Natural killer cell (primary cell): ENCODE measurements at regions of chr5 and their contacts with region 1.

Region 1: GRCh38 chr5:68287976-68288706 is 72.6 kb downstream of the PIK3R1 start:
- DNase-seq: peak; percentile 53 to 72
- ATAC-seq: peak; percentile 77 to 86 (median 82)
- H3K4me3 ChIP-seq: peak overlapping the region; percentile 62
- H3K4me3 Mint-ChIP-seq: peak overlapping the region; percentile 92
- H3K27ac ChIP-seq: peak overlapping the region; percentile 88
- H3K27ac Mint-ChIP-seq: peak overlapping the region; percentile 92
- H3K4me1 ChIP-seq: peaks cover 31% of the 10 kb centered on the region
- H3K4me1 Mint-ChIP-seq: peaks cover 83 to 88% of the 10 kb centered on the region in 2 donors
- H3K27me3 ChIP-seq: no peaks in the 10 kb centered on the region
- H3K27me3 Mint-ChIP-seq: no peaks in the 10 kb centered on the region
- CTCF ChIP-seq: no peak

Region 2: GRCh38 chr5:68041293-68041692 is 246.8 kb before region 1 on chr5:
- intact Hi-C with region 1: no loop called
- DNase-seq: no peak
- ATAC-seq: peak; percentile 58 to 94 (median 64)
- H3K4me3 ChIP-seq: no peak overlapping the region
- H3K4me3 Mint-ChIP-seq: no peak overlapping the region
- H3K27ac ChIP-seq: no peak overlapping the region
- H3K27ac Mint-ChIP-seq: no peak overlapping the region
- H3K4me1 ChIP-seq: peaks cover 13% of the 10 kb centered on the region
- H3K4me1 Mint-ChIP-seq: peaks cover 6 to 14% of the 10 kb centered on the region in 2 donors
- H3K27me3 ChIP-seq: peaks cover 2% of the 10 kb centered on the region
- H3K27me3 Mint-ChIP-seq: peaks cover 0 to under 1% of the 10 kb centered on the region in 2 donors
- CTCF ChIP-seq: no peak

Region 3: DNA sequence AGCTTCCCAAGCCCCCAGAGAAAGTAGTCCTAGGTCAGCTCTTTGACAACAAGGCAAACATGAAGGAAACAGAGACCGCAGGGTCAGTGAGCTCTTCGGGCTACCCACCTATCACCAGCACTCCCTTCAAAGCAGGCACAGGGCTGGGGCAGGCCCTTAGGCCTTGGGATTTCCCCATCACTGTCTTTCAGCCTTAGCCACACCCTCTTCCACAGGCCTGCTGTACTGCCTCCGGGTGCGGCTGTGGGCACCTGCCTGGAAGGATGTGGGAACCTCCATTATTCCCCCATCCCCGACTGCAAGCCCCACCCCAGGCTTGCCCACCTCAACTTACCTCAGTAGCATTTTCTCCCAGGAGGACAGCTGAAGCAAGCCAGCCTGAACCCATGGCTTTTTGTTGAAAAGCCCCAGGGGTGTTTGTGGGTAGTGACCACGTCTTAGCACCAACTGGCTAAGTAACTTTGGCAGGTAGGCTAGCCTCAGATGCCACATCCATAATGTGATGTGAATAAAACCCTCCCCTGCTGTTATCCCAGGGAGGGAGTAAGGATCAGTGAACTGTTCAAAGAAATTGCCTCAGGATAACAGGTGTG is 27.6 kb after region 1 on chr5:
- intact Hi-C with region 1: loop called (anchors 2 kb)
- DNase-seq: peak; percentile 31 to 69
- ATAC-seq: peak; percentile 92 to 95 (median 94)
- H3K4me3 ChIP-seq: no peak overlapping the region
- H3K4me3 Mint-ChIP-seq: no peak overlapping the region
- H3K27ac ChIP-seq: peak overlapping the region; percentile 61
- H3K27ac Mint-ChIP-seq: peak overlapping the region; percentile 24 to 39
- H3K4me1 ChIP-seq: peaks cover 20% of the 10 kb centered on the region
- H3K4me1 Mint-ChIP-seq: peaks cover 10 to 14% of the 10 kb centered on the region in 2 donors
- H3K27me3 ChIP-seq: no peaks in the 10 kb centered on the region
- H3K27me3 Mint-ChIP-seq: no peaks in the 10 kb centered on the region
- CTCF ChIP-seq: no peak

Region 4: GRCh38 chr5:68343421-68343826 is 55.3 kb after region 1 on chr5:
- intact Hi-C with region 1: loop called (anchors 10 kb)
- DNase-seq: peak in 1 of 2 donors; percentile 14
- ATAC-seq: peak in 2 of 3 donors; percentile 24 to 28
- H3K4me3 ChIP-seq: no peak overlapping the region
- H3K4me3 Mint-ChIP-seq: no peak overlapping the region
- H3K27ac ChIP-seq: no peak overlapping the region
- H3K27ac Mint-ChIP-seq: peak overlapping the region in 1 of 2 donors; percentile 79
- H3K4me1 ChIP-seq: peaks cover 24% of the 10 kb centered on the region
- H3K4me1 Mint-ChIP-seq: peaks cover 31 to 36% of the 10 kb centered on the region in 2 donors
- H3K27me3 ChIP-seq: no peaks in the 10 kb centered on the region
- H3K27me3 Mint-ChIP-seq: no peaks in the 10 kb centered on the region
- CTCF ChIP-seq: no peak

Region 5: DNA sequence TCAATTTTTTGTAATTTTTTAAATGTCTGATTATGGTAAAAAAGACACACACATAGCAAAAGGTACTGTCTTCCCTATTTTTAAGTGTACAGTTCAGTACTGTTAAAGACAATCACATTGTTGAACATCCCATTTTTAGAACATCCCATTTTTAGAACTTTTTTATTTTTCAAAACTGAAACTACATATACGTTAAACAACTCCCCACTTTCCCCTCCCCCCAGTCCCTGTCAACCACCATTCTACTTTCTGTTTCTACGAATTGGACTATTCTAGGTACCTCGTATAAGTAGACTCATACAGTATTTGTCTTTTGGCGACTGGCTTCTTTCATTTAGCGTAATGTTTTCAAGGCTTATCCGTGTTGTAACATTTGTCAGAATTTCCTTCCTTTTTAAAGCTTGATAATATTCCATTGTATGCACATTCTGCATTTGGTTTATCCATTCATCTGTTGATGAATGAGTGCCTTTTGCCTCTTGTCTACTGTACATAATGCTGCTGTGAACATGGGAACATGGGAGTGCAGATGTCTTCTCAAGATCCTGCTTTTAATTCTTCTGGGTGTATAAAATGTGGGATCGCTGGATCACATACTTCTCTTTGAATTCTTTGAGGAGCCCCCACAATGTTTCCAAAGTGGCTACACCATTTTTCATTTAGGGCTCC is 81.5 kb after region 1 on chr5:
- intact Hi-C with region 1: loop called (anchors 1 kb)
- DNase-seq: peak in 1 of 2 donors; percentile 73
- ATAC-seq: peak; percentile 93 to 99 (median 98)
- H3K4me3 ChIP-seq: peak overlapping the region; percentile 6
- H3K4me3 Mint-ChIP-seq: peak overlapping the region; percentile 74
- H3K27ac ChIP-seq: peak overlapping the region; percentile 64
- H3K27ac Mint-ChIP-seq: peak overlapping the region; percentile 84 to 88
- H3K4me1 ChIP-seq: peaks cover 15% of the 10 kb centered on the region
- H3K4me1 Mint-ChIP-seq: peaks cover 37 to 40% of the 10 kb centered on the region in 2 donors
- H3K27me3 ChIP-seq: no peaks in the 10 kb centered on the region
- H3K27me3 Mint-ChIP-seq: no peaks in the 10 kb centered on the region
- CTCF ChIP-seq: no peak

Region 6: DNA sequence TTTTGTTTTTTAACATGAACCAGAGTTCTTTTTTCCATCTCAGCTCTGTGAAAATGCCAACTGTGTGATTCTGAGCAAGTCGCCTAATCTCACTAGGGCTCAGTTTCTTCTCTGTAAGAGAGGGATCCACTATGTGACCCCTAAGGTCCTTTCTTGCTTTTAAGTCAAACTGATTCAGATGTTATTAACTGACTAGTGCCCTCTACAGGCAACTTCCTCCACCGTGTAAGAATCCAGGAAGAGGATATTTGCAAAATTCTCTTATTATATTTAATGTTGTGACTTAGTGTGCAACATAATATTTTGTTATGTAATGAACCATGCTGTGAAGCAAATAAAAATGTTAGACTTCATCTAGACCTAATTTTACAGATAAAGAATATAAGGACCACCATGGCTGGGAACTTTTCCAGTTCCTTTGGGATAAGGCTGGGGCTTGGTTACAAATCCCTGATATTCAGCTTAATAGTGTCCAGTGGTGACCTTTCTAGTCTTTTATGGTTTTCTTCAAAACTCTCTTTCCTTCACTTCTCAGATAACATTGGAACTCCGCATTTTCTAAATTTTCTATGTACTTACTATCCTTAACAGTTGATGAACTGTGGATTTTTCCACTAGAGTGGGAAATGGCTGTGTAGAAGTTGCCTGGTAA is 172.1 kb after region 1 on chr5:
- intact Hi-C with region 1: loop called (anchors 1 kb)
- DNase-seq: peak in 1 of 2 donors; percentile 82
- ATAC-seq: peak; percentile 62 to 78 (median 68)
- H3K4me3 ChIP-seq: no peak overlapping the region
- H3K4me3 Mint-ChIP-seq: no peak overlapping the region
- H3K27ac ChIP-seq: no peak overlapping the region
- H3K27ac Mint-ChIP-seq: no peak overlapping the region
- H3K4me1 ChIP-seq: peaks cover 12% of the 10 kb centered on the region
- H3K4me1 Mint-ChIP-seq: peaks cover 7 to 9% of the 10 kb centered on the region in 2 donors
- H3K27me3 ChIP-seq: no peaks in the 10 kb centered on the region
- H3K27me3 Mint-ChIP-seq: no peaks in the 10 kb centered on the region
- CTCF ChIP-seq: peak; percentile 85

Region 7: GRCh38 chr5:68962757-68963484 is 674.8 kb after region 1 on chr5:
- intact Hi-C with region 1: loop called (anchors 5 kb)
- DNase-seq: peak in 1 of 2 donors; percentile 21
- ATAC-seq: no peak
- H3K4me3 ChIP-seq: no peak overlapping the region
- H3K4me3 Mint-ChIP-seq: no peak overlapping the region
- H3K27ac ChIP-seq: no peak overlapping the region
- H3K27ac Mint-ChIP-seq: no peak overlapping the region
- H3K4me1 ChIP-seq: no peaks in the 10 kb centered on the region
- H3K4me1 Mint-ChIP-seq: no peaks in the 10 kb centered on the region
- H3K27me3 ChIP-seq: no peaks in the 10 kb centered on the region
- H3K27me3 Mint-ChIP-seq: no peaks in the 10 kb centered on the region
- CTCF ChIP-seq: no peak

Region 8: GRCh38 chr5:69007726-69008368 is 719.7 kb after region 1 on chr5:
- intact Hi-C with region 1: loop called (anchors 2 kb)
- DNase-seq: peak; percentile 40 to 79
- ATAC-seq: peak; percentile 75 to 87 (median 78)
- H3K4me3 ChIP-seq: no peak overlapping the region
- H3K4me3 Mint-ChIP-seq: no peak overlapping the region
- H3K27ac ChIP-seq: no peak overlapping the region
- H3K27ac Mint-ChIP-seq: no peak overlapping the region
- H3K4me1 ChIP-seq: no peaks in the 10 kb centered on the region
- H3K4me1 Mint-ChIP-seq: no peaks in the 10 kb centered on the region
- H3K27me3 ChIP-seq: no peaks in the 10 kb centered on the region
- H3K27me3 Mint-ChIP-seq: peaks cover 14 to 50% of the 10 kb centered on the region in 2 donors
- CTCF ChIP-seq: peak; percentile 79

Region 9: DNA sequence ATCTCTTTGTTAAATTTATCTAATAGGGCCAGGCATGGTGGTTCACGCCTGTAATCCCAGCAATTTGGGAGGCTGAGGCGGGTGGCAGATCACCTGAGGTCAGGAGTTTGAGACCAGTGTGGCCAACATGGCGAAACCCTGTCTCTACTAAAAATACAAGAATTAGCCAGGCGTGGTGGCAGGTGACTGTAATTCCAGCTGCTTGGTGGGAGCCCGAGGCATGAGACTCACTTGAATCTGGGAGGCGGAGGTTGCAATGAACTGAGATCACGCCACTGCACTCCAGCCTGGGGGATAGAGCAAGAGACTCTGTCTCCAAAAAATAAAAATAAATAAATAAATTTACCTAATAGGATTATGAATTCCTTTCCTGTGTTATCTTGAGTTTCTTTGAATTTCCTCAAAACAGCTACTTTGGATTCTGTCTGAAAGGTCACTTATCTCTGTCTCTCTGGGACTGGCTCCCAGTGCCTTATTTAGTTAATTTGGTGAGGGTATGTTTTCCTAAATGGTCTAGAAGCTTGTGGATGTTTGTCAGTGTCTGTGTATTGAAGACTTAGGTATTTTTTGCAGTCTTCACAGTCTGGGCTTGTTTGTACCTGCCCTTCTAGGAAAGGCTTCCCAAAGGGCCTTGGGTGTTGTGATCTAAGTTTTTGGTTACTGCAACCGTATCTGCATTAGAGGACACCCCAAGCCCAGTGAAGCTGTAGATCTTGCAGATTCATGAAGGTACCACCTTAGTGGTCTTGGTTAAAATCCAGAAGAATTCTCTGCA is 860.6 kb after region 1 on chr5:
- intact Hi-C with region 1: no loop called
- DNase-seq: no peak
- ATAC-seq: no peak
- H3K4me3 ChIP-seq: no peak overlapping the region
- H3K4me3 Mint-ChIP-seq: no peak overlapping the region
- H3K27ac ChIP-seq: no peak overlapping the region
- H3K27ac Mint-ChIP-seq: no peak overlapping the region
- H3K4me1 ChIP-seq: no peaks in the 10 kb centered on the region
- H3K4me1 Mint-ChIP-seq: no peaks in the 10 kb centered on the region
- H3K27me3 ChIP-seq: no peaks in the 10 kb centered on the region
- H3K27me3 Mint-ChIP-seq: no peaks in the 10 kb centered on the region
- CTCF ChIP-seq: no peak